ENCODE measurements at regions of chr5 and their contacts with region 1.

Region 1: DNA sequence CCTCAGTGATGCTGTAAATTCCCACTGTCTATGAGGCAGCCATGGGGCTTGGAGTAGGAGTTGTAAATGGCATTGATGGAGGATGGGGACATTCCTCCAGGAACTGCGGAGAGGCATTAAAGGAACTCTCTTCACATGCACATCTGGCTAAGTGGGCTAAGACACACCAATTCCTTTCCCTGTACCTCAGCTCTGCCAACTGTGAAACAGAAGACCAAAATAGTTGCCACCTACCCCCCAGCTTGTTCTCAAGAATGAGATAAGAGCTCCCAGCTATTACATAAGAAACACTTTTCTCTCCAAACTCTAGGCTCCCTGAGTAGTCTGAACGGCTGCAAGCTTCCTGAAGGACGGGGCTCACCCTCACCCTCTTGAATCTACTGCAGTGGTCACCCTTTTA is 144.6 kb upstream of the SLC30A5 start:
- DNase-seq: no peak
- ATAC-seq: no peak

Region 2: DNA sequence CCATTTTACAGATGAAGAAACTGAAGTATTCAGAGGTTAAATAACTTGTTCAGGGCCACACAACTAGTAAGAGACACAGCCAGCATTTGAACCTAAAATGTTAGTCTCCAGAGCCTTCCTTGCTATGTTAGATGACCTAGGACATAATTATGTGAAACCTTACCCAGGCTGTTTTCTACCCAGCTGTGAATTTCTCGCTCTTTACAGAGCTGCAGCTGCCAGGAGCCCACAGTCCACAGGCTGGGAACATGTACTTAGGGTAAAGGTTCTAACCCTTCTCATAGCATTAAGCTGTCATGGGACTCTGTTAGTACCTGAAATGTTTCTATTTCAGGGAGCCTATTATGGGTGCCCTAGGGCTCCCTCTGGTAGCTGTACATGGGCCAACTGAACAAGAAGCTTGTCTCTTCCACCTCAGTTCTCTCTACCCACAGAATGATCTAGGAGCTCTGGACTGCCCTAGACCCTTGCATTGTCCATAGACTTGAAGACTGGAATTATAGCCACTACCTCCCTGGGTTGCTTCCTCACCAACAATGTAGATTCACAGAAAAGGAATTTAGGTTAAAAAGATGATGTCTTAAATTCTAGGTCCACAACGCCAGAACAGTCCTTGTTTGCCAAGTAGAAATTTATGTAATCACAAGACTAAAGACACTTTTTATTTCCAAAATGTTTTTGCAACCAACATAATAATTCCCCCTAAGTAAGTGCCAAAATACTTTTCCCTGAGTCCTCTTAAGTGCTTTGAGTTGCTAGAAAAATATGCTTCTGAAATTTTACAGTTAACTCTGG is 470.8 kb before region 1 on chr5:
- intact Hi-C with region 1: loop called (anchors 10 kb)
- DNase-seq: no peak
- ATAC-seq: peak; percentile 52